ENCODE measurements at regions of chr1 and their contacts with region 1.

Region 1: DNA sequence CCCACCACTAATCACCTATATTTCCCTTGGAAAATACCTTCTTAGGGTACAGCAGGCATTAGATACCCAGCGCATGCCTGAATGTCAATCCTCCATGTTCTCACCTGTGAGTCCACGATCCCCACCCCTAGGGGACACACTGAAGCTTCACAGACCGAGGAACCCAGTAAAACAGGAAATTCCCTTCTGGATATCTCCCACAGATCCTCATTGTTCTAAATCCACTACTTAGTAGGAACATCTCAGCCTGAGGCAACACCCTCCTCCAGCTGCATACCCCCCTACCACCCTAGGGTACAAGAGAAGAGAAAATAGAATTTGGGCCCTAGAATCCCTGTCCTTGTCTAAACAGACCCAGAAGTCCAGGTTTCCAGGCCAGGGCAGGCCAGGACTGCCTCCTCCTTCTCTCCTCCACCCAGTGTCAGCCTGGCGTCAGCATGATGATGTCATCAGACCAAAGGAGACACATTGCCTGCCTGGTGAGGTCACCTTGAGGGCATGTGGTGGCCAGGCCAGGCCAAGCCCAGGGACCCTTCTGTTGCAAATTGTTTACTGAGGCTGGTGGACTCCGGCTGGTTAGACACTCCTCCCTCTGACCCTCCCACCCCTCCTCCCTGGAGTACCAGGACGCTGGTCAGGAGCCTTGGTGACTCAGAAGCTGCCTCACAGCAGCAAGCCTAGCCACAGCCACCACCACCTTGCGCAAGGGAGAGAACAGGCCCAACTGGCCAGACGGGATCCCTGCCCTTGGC is 6.2 kb downstream of the NECTIN4 start:
- DNase-seq: peak; percentile 92 to 95
- H3K4me3 ChIP-seq: no peak overlapping the region
- H3K4me3 Mint-ChIP-seq: peak overlapping the region; percentile 9
- H3K27ac Mint-ChIP-seq: peak overlapping the region; percentile 67
- H3K4me1 ChIP-seq: peaks cover 43% of the 10 kb centered on the region
- H3K4me1 Mint-ChIP-seq: peaks cover 37% of the 10 kb centered on the region
- H3K27me3 ChIP-seq: no peaks in the 10 kb centered on the region
- H3K27me3 Mint-ChIP-seq: no peaks in the 10 kb centered on the region
- CTCF ChIP-seq: no peak

Region 2: GRCh38 chr1:161045750-161046571 is 37.2 kb before region 1 on chr1 and contains the start of gene USF1:
- CTCF ChIA-PET with region 1: no interaction called
- POLR2A ChIA-PET with region 1: interaction called, 10 read pairs
- intact Hi-C with region 1: no loop called
- DNase-seq: peak; percentile 94 to 95
- H3K4me3 ChIP-seq: peak within 1 kb of the TSS; percentile 76
- H3K4me3 Mint-ChIP-seq: peak within 1 kb of the TSS; percentile 90
- H3K27ac Mint-ChIP-seq: peak within 1 kb of the TSS; percentile 95
- H3K4me1 ChIP-seq: peaks cover 6% of the 10 kb centered on the region
- H3K4me1 Mint-ChIP-seq: no peaks in the 10 kb centered on the region
- H3K27me3 ChIP-seq: no peaks in the 10 kb centered on the region
- H3K27me3 Mint-ChIP-seq: no peaks in the 10 kb centered on the region
- CTCF ChIP-seq: no peak
- total RNA-seq, gene USF1: 49.7 and 52.7 TPM in 2 replicates

Region 3: GRCh38 chr1:161111527-161111926 is 28.4 kb after region 1 on chr1:
- CTCF ChIA-PET with region 1: no interaction called
- POLR2A ChIA-PET with region 1: no interaction called
- intact Hi-C with region 1: no loop called
- DNase-seq: no peak
- H3K4me3 ChIP-seq: no peak overlapping the region
- H3K4me3 Mint-ChIP-seq: no peak overlapping the region
- H3K27ac Mint-ChIP-seq: no peak overlapping the region
- H3K4me1 ChIP-seq: no peaks in the 10 kb centered on the region; the same call in 1 of the 2 replicates
- H3K4me1 Mint-ChIP-seq: no peaks in the 10 kb centered on the region
- H3K27me3 ChIP-seq: no peaks in the 10 kb centered on the region
- H3K27me3 Mint-ChIP-seq: no peaks in the 10 kb centered on the region
- CTCF ChIP-seq: no peak